ENCODE measurements at regions of chr2 and their contacts with region 1.

Region 1: DNA sequence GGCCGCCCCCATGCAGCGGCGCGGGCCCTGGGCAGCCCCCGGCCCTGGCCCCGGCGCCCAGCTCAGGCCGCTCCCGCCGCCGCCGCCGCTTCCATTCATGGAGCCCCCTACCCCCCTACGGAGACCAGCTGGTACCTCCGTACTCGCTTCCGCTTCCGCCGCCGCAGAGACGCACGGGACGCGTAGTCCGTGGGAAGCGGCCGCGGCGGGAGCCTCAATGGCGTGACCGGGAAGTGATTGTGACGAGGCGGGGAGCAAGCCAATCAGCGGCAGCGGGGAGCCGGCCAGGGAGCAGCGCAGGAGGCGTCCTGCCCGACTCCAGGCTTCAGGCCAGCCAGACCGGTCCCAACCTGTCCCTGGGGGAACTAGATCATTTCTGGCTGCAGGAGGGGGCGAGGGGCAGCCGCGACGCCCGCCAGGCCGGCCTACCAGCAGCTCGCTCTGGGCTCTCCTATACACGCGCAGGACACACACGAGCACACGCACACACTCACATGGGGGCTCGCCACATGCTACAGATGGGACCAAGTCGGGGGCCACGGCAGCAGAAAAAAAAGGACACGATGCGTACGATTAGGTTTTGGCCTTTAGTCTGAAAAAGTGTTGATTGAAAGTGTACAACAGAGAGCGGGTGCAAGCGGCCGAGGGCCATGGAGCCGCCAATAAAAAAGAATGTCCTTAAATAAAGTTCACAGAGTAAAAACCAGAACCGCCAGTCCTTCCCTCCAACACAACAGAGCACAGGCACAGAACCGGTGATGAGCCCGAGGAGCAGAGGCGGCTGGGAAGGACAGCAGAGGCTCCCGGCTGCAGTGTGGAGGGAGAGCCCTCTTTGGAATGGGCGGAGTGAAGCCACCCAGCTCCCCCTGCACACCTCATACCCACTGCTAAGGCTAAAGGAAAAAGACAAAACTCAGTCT is at the start of gene ZNF513:
- DNase-seq: peak; percentile 63
- ATAC-seq: peak; percentile 56
- H3K4me3 ChIP-seq: peak within 1 kb of the TSS; percentile 50 to 75 (median 63)
- H3K27ac ChIP-seq: peak within 1 kb of the TSS; percentile 85
- H3K4me1 ChIP-seq: peaks cover 26% of the 10 kb centered on the region
- H3K27me3 ChIP-seq: no peaks in the 10 kb centered on the region
- CTCF ChIP-seq: peak; percentile 10; the same call in 1 of the 2 replicates
- EP300 ChIP-seq: 0 out of 4 replicates have a peak, but pooled peaks of 1 of the 2 experiments have one; percentile 5
- POLR2A ChIP-seq: peak in 1 of 2 experiments; percentile 17; a peak in 1 of 4 replicates
- RAD21 ChIP-seq: peak; percentile 11; the same call in 1 of the 2 replicates
- total RNA-seq, gene ZNF513: 2.4 and 4.9 TPM in 2 replicates

Region 2: DNA sequence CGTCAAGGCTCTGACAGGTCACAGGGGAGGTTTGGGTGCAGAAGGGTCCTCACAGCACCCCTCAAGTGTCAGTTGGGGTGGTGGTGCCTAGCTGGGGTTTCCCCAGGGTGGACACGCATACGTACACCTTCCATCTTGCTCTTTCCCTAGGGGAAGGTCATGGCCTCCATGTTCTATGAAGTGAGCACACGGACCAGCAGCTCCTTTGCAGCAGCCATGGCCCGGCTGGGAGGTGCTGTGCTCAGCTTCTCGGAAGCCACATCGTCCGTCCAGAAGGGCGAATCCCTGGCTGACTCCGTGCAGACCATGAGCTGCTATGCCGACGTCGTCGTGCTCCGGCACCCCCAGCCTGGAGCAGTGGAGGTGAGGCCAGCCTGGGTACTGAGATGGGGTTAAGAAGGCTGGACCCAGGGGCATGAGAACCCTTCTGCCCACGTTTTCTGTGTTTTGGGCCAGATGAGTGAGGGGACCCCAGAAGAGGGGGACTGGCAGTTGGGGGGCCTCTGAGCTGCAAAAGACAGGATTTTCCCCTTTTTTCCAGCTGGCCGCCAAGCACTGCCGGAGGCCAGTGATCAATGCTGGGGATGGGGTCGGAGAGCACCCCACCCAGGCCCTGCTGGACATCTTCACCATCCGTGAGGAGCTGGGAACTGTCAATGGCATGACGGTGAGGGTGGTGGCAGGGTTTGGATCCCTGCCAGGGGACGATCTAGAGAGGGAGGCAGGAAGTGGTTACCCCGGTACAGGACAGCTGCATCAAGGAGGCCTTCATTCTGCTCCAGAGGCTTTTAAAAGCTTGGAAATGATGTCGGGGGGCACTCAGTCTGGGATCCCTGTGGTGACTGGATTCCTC is 138.9 kb before region 1 on chr2:
- CTCF ChIA-PET with region 1: no interaction called
- POLR2A ChIA-PET with region 1: no interaction called
- in situ Hi-C with region 1: no loop called
- intact Hi-C with region 1: no loop called
- DNase-seq: no peak
- ATAC-seq: no peak
- H3K4me3 ChIP-seq: no peak overlapping the region
- H3K27ac ChIP-seq: no peak overlapping the region
- H3K4me1 ChIP-seq: no peaks in the 10 kb centered on the region
- H3K27me3 ChIP-seq: no peaks in the 10 kb centered on the region
- CTCF ChIP-seq: no peak
- EP300 ChIP-seq: no peak
- POLR2A ChIP-seq: no peak
- RAD21 ChIP-seq: no peak

Region 3: DNA sequence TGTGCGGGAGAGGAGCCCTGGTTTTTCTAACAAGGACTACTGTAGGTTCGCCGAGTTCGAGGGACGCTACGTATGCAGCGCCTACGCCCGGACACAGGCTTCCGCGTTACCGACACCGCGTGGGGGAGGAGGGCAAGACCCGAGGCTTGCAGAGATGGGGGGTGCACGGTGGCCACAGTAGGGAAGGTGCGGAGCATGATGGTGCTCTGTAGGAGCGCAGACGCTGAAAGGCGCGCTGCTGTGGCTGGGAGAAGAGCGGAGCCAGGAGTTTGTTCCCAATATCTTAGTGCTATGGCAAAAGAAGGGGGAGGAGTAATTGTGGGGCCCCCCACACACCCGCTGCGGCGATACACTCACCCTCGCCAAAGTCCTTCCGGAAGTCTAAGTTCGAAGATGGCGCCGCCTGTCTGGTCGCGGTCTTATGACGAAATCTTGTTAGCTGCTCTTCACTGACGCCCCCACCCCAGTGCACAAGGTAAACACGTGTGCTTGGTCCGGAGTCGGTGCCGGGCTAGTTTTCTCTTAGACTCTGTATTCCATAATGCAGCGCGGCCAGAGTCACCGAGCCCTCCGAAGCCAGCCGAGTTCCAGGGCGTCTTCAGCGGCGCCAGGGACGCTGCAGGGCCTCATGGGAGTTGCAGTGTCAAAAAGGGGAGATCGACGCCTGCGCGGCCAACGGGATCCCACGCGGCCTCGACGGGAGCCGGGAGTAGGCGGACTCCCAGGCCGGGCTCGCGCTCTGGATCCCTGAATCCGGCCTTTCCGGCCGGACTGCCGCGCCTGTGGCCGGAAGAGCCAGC is 24.3 kb before region 1 on chr2 and contains the start of gene GTF3C2:
- CTCF ChIA-PET with region 1: no interaction called
- POLR2A ChIA-PET with region 1: interaction called, 18 read pairs
- in situ Hi-C with region 1: no loop called
- intact Hi-C with region 1: no loop called
- DNase-seq: peak; percentile 99
- ATAC-seq: peak; percentile 88
- H3K4me3 ChIP-seq: peak within 1 kb of the TSS; percentile 72 to 91 (median 85)
- H3K27ac ChIP-seq: peak within 1 kb of the TSS; percentile 96
- H3K4me1 ChIP-seq: peaks cover 64% of the 10 kb centered on the region
- H3K27me3 ChIP-seq: no peaks in the 10 kb centered on the region; a peak in 1 of 5 replicates
- CTCF ChIP-seq: 0 out of 2 replicates have a peak, but pooled peaks have one; percentile 25
- EP300 ChIP-seq: peak in 1 of 2 experiments; percentile 55; a peak in 3 of 4 replicates
- POLR2A ChIP-seq: peak; percentile 58 to 60
- RAD21 ChIP-seq: peak; percentile 45; the same call in 1 of the 2 replicates
- total RNA-seq, gene GTF3C2: 77.5 and 80.0 TPM in 2 replicates

Region 4: DNA sequence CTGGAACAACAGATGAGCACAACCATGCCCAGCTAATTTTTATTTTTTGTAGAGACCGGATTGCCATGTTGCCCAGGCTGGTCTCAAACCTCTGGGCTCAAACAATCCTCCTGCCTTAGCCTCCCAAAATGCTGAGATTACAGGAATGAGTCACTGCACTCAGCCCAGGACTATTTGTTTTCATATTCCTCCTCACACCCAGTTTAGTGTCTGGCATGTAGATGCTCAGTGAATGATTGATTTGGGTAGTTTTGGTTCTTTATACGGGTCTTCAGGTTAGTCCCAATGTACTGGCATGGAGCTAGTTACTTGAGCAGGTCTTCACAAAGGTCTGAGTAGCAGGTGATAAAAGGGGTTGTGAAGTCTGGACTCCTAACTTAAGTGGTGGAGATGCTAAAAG is 17.0 kb before region 1 on chr2:
- CTCF ChIA-PET with region 1: no interaction called
- POLR2A ChIA-PET with region 1: interaction called, 38 read pairs
- in situ Hi-C with region 1: no loop called
- intact Hi-C with region 1: no loop called
- DNase-seq: no peak
- ATAC-seq: peak; percentile 12
- H3K4me3 ChIP-seq: no peak overlapping the region
- H3K27ac ChIP-seq: no peak overlapping the region
- H3K4me1 ChIP-seq: peaks cover 23% of the 10 kb centered on the region
- H3K27me3 ChIP-seq: no peaks in the 10 kb centered on the region
- CTCF ChIP-seq: no peak
- EP300 ChIP-seq: no peak
- POLR2A ChIP-seq: no peak
- RAD21 ChIP-seq: no peak

Region 5: DNA sequence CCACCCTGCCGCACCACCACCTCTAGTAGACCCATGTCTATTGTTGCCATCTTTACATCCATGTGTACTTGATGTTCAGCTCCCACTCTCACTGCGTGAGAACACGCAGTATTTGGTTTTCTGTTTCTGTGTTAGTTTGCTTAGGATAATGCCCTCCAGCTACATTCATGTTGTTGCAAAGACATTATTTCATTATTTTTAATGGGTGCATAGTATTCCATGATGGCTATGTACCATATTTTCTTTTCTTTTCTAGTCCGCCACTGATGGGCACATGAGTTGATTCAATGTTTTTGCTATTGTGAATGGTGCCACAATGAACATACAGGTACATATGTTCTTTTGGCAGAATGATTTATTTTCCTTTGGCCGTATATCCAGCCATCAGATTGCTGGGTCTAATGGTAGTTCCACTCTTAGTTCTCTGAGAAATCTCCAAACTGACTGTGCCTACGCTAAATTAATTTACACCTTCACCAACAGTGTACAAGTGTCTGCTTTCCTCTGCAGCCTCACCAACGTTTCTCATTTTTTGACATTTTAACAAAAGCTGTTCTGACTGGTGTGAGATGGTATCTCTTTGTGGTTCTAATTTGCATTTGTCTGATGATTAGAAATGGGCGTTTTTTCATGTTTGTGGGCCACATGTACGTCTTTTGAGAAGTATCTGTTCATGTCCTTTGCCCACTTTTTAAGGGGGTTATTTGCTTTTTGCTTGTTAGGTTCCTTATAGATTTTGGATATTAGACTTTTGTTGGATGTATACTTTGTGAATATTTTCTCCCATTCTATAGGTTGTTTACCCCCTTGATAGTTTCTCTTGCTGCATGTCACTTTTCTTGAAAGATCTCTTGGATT is 10.2 kb after region 1 on chr2:
- CTCF ChIA-PET with region 1: no interaction called
- POLR2A ChIA-PET with region 1: no interaction called
- in situ Hi-C with region 1: no loop called
- intact Hi-C with region 1: no loop called
- DNase-seq: no peak
- ATAC-seq: no peak
- H3K4me3 ChIP-seq: no peak overlapping the region
- H3K27ac ChIP-seq: no peak overlapping the region
- H3K4me1 ChIP-seq: no peaks in the 10 kb centered on the region
- H3K27me3 ChIP-seq: no peaks in the 10 kb centered on the region
- CTCF ChIP-seq: no peak
- EP300 ChIP-seq: no peak
- POLR2A ChIP-seq: no peak
- RAD21 ChIP-seq: no peak

Region 6: DNA sequence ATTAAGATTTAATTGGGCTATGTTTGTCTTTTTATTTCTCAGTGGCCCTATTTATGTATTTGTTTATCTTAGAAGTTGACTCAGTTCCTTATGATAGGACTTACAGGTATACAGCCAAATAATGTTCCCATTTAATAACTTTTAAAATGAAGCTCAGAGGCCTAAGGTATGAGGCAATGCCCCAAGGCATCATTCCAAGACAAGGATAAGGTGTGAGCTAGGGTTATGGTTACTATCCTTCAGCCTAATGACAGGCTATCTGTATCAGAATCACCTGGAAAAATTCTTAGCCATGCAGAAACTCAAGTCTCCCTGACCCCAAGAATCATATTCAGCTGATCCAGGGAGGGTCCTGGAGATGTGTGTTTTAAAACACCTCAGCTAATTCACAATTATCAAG is 40.1 kb after region 1 on chr2:
- CTCF ChIA-PET with region 1: no interaction called
- POLR2A ChIA-PET with region 1: no interaction called
- in situ Hi-C with region 1: no loop called
- intact Hi-C with region 1: no loop called
- DNase-seq: no peak
- ATAC-seq: no peak
- H3K4me3 ChIP-seq: no peak overlapping the region
- H3K27ac ChIP-seq: no peak overlapping the region
- H3K4me1 ChIP-seq: peaks cover 38% of the 10 kb centered on the region
- H3K27me3 ChIP-seq: no peaks in the 10 kb centered on the region
- CTCF ChIP-seq: no peak
- EP300 ChIP-seq: no peak
- POLR2A ChIP-seq: no peak
- RAD21 ChIP-seq: no peak